ENCODE measurements at regions of chr2 and their contacts with region 1.

Region 1: DNA sequence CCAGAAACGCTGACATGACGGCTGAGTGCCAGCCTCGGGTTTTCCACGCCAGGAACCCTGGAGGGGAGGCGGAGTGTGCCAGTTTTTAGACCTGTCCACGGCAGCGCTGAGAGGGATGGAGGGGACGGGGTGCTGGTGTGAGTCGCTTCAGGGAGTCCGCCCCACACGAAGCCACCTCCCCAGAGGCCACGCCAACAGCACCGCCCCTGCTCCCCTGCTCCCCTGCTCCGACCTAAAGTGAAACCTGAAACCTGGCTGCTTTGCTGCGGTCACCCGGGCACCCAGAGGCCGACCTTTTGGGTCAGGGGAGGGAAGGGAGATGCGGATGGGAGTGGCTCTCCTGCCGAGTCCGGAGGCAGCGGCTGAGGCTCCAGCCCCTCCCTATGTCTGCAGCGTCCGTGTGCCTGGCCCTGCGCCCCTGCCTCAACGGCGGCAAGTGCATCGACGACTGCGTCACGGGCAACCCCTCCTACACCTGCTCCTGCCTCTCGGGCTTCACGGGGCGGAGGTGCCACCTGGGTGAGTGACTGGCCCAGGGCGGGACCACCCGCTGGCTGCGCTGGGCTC is 38.1 kb downstream of the SNED1 start:
- DNase-seq: peak; percentile 31 to 83 (median 58)
- ATAC-seq: peak; percentile 72
- H3K4me3 ChIP-seq: peak overlapping the region; percentile 79
- H3K4me3 Mint-ChIP-seq: peak overlapping the region; percentile 60 to 88 (median 80)
- H3K27ac ChIP-seq: peak overlapping the region; percentile 66
- H3K27ac Mint-ChIP-seq: peak overlapping the region in 6 of 9 donors; percentile 49 to 91 (median 80)
- H3K4me1 ChIP-seq: peaks cover 7 to 10% of the 10 kb centered on the region in 2 donors
- H3K4me1 Mint-ChIP-seq: peaks cover 0 to 24% (median 6%) of the 10 kb centered on the region in 7 donors
- H3K27me3 ChIP-seq: no peaks in the 10 kb centered on the region
- H3K27me3 Mint-ChIP-seq: no peaks in the 10 kb centered on the region

Region 2: DNA sequence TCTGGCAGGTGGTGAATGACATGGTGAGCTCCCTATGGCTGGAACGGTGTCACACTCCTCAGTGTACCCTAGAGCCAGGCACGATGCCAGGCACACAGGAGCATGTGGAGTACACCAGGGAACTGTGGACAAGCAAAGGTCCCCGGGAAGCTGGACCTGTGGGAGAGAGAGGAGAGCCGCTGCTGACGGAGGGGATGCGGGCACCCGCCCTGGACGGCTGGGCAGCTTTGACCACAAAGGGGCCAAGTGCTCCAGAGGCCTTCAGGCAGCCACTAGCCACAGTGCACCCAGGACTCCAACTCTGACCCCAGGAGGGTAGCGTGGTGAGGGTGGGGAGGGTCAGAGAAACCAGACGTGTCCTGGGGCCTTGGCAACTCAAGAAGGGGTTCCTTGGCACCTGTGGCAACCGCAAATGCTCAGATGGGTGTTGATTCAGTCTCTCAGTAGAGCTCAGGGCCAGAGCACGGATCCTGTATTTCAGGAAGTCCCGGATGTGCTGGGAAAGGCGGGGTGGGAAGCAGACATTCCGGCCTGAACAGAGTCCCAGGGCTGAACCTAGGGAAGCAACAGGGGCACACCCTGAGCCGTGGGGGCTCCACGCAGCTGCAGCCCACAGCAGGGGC is 138.3 kb before region 1 on chr2:
- CTCF ChIA-PET with region 1: no interaction called
- POLR2A ChIA-PET with region 1: no interaction called
- intact Hi-C with region 1: no loop called
- DNase-seq: no peak
- ATAC-seq: no peak
- H3K4me3 ChIP-seq: no peak overlapping the region
- H3K4me3 Mint-ChIP-seq: no peak overlapping the region
- H3K27ac ChIP-seq: no peak overlapping the region
- H3K27ac Mint-ChIP-seq: no peak overlapping the region
- H3K4me1 ChIP-seq: no peaks in the 10 kb centered on the region
- H3K4me1 Mint-ChIP-seq: peaks cover 0 to 5% (median 0%) of the 10 kb centered on the region in 7 donors
- H3K27me3 ChIP-seq: no peaks in the 10 kb centered on the region
- H3K27me3 Mint-ChIP-seq: no peaks in the 10 kb centered on the region

Region 3: DNA sequence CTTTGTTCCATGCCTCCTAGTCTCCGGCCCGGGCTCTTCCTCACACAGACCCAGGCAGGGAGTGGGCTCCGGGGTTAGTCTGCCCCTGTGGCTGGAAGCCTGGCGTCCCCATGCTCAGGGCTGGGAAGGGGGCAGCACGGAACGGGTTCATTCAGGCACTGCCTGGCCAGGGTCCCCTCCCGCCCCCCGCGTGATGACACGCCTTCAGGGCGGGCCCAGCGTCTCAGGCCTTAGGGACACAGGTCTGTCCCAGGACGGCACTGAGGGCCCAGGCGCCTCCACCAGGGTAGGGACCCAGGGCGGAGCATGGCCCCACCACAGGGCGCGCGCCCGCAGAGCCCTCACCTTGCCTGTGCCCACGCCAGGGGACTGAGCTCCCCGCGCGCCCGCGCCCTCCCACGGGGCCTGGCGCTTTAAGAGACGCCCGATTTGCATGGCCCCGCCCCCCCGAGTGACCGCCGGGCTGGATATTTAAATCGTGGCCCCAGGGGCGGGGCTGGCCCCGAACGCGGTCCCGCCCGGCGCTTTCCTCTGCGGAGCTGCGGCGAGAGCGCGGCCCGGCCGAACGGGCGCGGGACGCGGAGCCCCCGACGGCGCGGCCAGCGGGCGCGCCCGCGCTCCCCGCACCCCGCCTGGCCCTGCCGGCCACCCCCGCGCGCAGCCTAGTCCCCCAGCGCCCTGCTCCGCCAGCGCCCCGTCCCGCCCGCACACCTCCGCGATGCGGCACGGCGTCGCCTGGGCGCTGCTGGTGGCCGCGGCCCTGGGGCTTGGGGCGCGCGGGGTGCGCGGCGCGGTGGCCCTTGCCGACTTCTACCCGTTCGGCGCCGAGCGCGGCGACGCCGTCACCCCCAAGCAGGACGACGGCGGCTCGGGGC is 38.1 kb before region 1 on chr2 and contains the start of gene SNED1:
- CTCF ChIA-PET with region 1: no interaction called
- POLR2A ChIA-PET with region 1: no interaction called
- intact Hi-C with region 1: loop called (anchors 1 to 5 kb)
- DNase-seq: peak in 6 of 9 donors; percentile 25 to 73 (median 45)
- ATAC-seq: peak; percentile 81
- H3K4me3 ChIP-seq: peak within 1 kb of the TSS; percentile 31
- H3K4me3 Mint-ChIP-seq: peak within 1 kb of the TSS; percentile 65 to 94 (median 78)
- H3K27ac ChIP-seq: peak within 1 kb of the TSS; percentile 48
- H3K27ac Mint-ChIP-seq: peak within 1 kb of the TSS in 7 of 9 donors; percentile 18 to 96 (median 78)
- H3K4me1 ChIP-seq: no peaks in the 10 kb centered on the region
- H3K4me1 Mint-ChIP-seq: peaks cover 4 to 14% (median 10%) of the 10 kb centered on the region in 7 donors
- H3K27me3 ChIP-seq: no peaks in the 10 kb centered on the region
- H3K27me3 Mint-ChIP-seq: peaks cover 0 to 33% (median 20%) of the 10 kb centered on the region in 5 donors
- total RNA-seq, gene SNED1: 20.3 to 120 (median 56.3) TPM

Measured in naive thymus-derived CD4-positive, alpha-beta T cell (primary cell).